ENCODE measurements at regions of chr3 and their contacts with region 1.

Region 1: DNA sequence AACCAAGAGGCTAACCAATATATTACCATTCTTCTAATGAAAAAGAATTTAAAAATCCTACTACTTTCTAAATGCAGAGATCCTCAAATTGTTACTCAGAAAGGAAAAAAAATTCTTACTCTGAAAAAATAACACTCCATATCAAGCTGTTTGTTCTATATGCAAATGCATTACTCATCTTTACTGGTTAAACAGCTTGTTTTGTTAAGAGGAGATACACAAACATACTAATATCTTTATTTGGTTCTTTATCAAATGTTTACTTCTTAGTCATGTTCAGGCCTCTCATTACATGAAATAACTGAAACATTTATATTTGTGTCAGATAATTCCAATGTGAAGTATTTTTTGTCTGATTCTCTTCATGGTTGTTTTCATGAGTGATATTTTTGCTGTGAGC is 146.8 kb downstream of the PCCB start:
- DNase-seq: no peak
- ATAC-seq: no peak
- H3K4me3 Mint-ChIP-seq: no peak overlapping the region
- H3K27ac Mint-ChIP-seq: peak overlapping the region; percentile 34
- H3K4me1 Mint-ChIP-seq: no peaks in the 10 kb centered on the region
- H3K27me3 Mint-ChIP-seq: no peaks in the 10 kb centered on the region

Region 2: GRCh38 chr3:136378011-136378410 is 18.9 kb before region 1 on chr3:
- CTCF ChIA-PET with region 1: interaction called, 14 read pairs
- POLR2A ChIA-PET with region 1: no interaction called
- DNase-seq: no peak
- ATAC-seq: no peak
- H3K4me3 Mint-ChIP-seq: no peak overlapping the region
- H3K27ac Mint-ChIP-seq: no peak overlapping the region
- H3K4me1 Mint-ChIP-seq: no peaks in the 10 kb centered on the region
- H3K27me3 Mint-ChIP-seq: no peaks in the 10 kb centered on the region

Region 3: DNA sequence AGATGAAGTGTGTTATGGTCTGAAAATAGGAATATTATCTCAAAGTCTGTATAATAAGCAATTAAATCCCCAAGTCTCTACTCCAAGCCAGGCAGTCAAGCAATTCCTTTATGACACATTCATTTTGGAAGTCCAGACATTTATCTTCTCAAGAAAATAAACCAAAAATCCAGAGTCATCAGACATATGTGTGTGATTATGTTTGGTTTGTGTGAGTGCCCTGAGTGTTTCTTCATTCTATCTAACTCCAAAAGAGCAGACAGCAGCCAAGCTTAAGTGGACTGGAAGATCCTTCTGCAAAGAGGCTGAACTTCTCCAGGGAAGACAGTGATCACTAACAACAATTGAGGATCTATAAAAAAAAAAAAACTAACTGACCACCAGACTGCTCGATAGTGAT is 115.5 kb after region 1 on chr3:
- CTCF ChIA-PET with region 1: no interaction called
- POLR2A ChIA-PET with region 1: no interaction called
- DNase-seq: no peak
- ATAC-seq: no peak
- H3K4me3 Mint-ChIP-seq: no peak overlapping the region
- H3K27ac Mint-ChIP-seq: no peak overlapping the region
- H3K4me1 Mint-ChIP-seq: no peaks in the 10 kb centered on the region
- H3K27me3 Mint-ChIP-seq: no peaks in the 10 kb centered on the region